SK-N-SH (cell line): ENCODE measurements at regions of chr17 and their contacts with region 1.

Region 1: GRCh38 chr17:81253358-81254131 is 14.4 kb downstream of the NDUFAF8 start:
- DNase-seq: peak; percentile 92
- H3K4me3 ChIP-seq: peak overlapping the region in 1 of 2 experiments; percentile 21; a peak in 1 of 4 replicates
- H3K27ac ChIP-seq: no peak overlapping the region; a peak in 1 of 4 replicates
- H3K4me1 ChIP-seq: peaks cover 0 to 38% of the 10 kb centered on the region in 2 experiments; a peak in 1 of 4 replicates
- H3K27me3 ChIP-seq: no peaks in the 10 kb centered on the region
- CTCF ChIP-seq: peak; percentile 92
- EP300 ChIP-seq: no peak
- RAD21 ChIP-seq: peak; percentile 99

Region 2: DNA sequence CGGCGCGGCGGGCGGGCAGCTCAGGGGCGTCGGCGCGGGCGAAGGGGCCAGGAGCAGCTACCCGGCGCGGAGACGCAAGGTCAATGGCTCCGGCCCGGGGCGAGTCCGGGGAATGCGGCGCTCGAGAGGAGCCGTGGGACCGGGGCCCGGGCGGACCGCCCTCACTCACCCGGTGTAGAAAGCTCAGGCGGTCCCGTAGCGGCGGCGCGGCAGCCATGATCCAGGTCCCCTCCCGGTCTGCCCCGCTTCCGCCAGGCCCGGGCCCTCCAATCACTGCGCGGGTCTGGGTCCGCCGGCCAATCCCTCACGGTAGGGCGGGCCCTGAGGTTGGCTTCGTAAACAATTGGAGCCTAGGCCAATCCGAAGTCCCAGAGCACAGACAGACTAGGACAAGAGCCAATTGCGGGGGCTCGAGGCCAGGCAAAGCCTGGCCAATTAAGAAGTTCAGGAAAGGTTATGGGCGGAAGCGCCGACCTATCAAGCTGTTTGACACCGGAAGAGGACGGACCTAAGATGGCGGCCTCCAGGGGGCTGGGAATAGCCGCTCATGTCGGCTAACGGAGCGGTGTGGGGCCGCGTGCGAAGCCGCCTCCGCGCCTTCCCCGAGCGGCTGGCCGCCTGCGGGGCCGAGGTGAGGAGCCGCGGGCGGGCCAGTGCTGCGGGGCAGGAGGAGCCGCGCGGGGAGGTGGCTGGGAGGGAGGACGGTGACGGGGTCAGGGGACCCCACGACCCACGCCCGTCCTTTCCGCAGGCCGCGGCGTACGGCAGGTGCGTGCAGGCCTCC is 14.5 kb before region 1 on chr17 and contains the starts of genes NDUFAF8 and TEPSIN:
- CTCF ChIA-PET with region 1: interaction called, 27 read pairs
- POLR2A ChIA-PET with region 1: no interaction called
- DNase-seq: peak; percentile 100
- H3K4me3 ChIP-seq: peak within 1 kb of the TSS; percentile 93 to 99
- H3K27ac ChIP-seq: peak within 1 kb of the TSS; percentile 43 to 84; a peak in 3 of 4 replicates
- H3K4me1 ChIP-seq: peaks cover 0 to 40% of the 10 kb centered on the region in 2 experiments; a peak in 2 of 4 replicates
- H3K27me3 ChIP-seq: no peaks in the 10 kb centered on the region
- CTCF ChIP-seq: no peak
- EP300 ChIP-seq: no peak
- RAD21 ChIP-seq: no peak
- polyA plus RNA-seq, gene NDUFAF8: 194 and 229 TPM in 2 replicates
- polyA plus RNA-seq, gene TEPSIN: 35.3 and 36.1 TPM in 2 replicates

Region 3: DNA sequence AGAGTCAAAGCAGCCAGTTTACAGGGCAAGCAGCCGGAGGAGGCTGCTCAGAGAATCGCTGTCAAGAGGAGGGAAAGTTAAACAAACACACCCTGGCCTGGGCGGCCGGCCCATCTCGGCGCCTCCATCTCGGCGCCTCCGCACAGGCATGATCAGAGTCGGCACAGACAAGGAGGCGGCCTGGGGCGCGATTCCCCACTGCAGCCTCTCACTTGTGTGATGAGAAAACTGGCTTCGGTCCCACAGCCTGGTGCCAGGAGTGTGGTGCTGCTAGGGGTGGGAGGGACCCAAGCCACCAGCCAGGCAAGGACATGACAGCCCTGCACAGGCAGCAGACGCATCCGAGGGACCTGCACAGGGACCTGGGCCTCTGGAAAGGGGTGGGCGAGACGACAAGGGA is 23.9 kb after region 1 on chr17:
- CTCF ChIA-PET with region 1: interaction called, 23 read pairs
- POLR2A ChIA-PET with region 1: no interaction called
- DNase-seq: peak; percentile 99
- H3K4me3 ChIP-seq: no peak overlapping the region
- H3K27ac ChIP-seq: peak overlapping the region in 1 of 2 experiments; percentile 77; a peak in 2 of 4 replicates
- H3K4me1 ChIP-seq: peaks cover 0 to 21% of the 10 kb centered on the region in 2 experiments; a peak in 1 of 4 replicates
- H3K27me3 ChIP-seq: no peaks in the 10 kb centered on the region
- CTCF ChIP-seq: no peak
- EP300 ChIP-seq: peak in 1 of 2 experiments; percentile 61; a peak in 1 of 4 replicates
- RAD21 ChIP-seq: peak; percentile 30; the same call in 1 of the 2 replicates